OCI-LY7 (cell line): ENCODE measurements at regions of chr15 and their contacts with region 1.

Region 1: DNA sequence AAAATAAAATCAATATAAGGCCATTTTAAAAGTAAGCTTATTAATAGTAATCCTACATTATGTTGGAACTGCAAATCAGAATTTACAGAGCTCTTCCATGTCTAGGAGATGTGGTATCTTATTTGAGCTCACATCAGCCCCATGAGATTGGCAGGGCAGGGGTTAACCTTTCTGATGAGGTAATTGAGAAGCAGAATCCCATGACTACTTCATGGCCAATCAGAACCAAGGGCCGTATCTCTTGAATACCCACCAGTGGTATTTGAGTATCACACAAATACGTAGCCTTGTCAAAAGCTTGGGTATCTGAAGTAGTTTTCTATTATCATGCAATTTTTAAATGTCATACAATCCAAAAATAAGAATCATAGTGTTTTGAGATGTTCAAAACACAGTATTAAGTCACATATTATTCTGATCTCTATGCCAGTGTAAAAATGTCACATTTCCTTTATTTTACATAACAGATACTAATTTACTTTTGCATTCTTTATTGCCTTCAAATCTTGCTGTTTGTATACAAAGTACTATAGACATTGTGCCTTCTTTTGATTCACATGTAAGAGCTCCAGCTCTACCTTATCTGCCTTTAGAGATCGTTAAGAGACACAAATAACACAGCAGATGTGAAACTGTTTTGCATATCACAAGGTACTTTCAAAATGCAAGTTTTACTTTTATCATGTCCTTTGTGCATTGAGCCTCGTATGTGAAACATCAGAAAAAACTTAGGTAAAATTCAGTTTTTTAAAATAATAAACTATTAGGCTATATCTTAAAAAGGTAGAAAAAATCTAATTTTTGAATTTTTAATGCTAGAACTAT is 251.7 kb upstream of the GOLGA6L4 start:
- DNase-seq: peak; percentile 43
- H3K4me3 ChIP-seq: peak overlapping the region; percentile 39
- H3K27ac ChIP-seq: peak overlapping the region; percentile 49
- H3K4me1 ChIP-seq: peaks cover 28% of the 10 kb centered on the region
- CTCF ChIP-seq: no peak

Region 2: DNA sequence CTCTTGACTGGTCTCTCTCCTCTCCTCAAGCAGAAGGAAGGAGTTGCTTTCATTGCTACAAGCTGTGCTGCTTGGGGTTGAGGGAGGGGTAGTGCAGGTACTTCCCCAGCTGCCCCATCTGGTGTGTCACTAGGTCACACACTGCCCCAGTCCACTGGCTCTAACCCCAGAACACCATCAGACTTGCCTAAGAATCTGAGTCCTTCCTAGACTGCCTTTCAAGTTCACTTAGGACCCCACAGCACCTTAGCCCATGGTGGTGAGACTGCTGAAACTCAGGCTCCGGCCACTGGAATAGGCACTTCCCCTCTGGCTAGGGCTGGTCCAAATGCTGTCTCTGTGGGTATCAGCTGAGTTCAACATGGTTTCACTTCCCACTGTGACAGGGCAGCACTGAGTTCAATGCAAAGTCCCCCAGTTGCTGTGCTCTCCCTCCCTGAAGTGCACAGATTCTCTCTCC is 28.0 kb before region 1 on chr15:
- CTCF ChIA-PET with region 1: no interaction called
- POLR2A ChIA-PET with region 1: interaction called, 13 read pairs
- intact Hi-C with region 1: no loop called
- DNase-seq: peak; percentile 23
- H3K4me3 ChIP-seq: no peak overlapping the region
- H3K27ac ChIP-seq: no peak overlapping the region
- H3K4me1 ChIP-seq: no peaks in the 10 kb centered on the region
- CTCF ChIP-seq: no peak

Region 3: GRCh38 chr15:84057714-84058331 is 74.0 kb after region 1 on chr15:
- CTCF ChIA-PET with region 1: no interaction called
- POLR2A ChIA-PET with region 1: no interaction called
- intact Hi-C with region 1: no loop called
- DNase-seq: no peak
- H3K4me3 ChIP-seq: no peak overlapping the region
- H3K27ac ChIP-seq: no peak overlapping the region
- H3K4me1 ChIP-seq: no peaks in the 10 kb centered on the region
- CTCF ChIP-seq: no peak